Activated CD4-positive, alpha-beta T cell treated with anti-CD3 and anti-CD28 coated beads, Interleukin-2, amount 10 ng/mL, durations not matched to agents 7 days and 5 days (primary cell): ENCODE measurements at regions of chr2 and their contacts with region 1.

Region 1: DNA sequence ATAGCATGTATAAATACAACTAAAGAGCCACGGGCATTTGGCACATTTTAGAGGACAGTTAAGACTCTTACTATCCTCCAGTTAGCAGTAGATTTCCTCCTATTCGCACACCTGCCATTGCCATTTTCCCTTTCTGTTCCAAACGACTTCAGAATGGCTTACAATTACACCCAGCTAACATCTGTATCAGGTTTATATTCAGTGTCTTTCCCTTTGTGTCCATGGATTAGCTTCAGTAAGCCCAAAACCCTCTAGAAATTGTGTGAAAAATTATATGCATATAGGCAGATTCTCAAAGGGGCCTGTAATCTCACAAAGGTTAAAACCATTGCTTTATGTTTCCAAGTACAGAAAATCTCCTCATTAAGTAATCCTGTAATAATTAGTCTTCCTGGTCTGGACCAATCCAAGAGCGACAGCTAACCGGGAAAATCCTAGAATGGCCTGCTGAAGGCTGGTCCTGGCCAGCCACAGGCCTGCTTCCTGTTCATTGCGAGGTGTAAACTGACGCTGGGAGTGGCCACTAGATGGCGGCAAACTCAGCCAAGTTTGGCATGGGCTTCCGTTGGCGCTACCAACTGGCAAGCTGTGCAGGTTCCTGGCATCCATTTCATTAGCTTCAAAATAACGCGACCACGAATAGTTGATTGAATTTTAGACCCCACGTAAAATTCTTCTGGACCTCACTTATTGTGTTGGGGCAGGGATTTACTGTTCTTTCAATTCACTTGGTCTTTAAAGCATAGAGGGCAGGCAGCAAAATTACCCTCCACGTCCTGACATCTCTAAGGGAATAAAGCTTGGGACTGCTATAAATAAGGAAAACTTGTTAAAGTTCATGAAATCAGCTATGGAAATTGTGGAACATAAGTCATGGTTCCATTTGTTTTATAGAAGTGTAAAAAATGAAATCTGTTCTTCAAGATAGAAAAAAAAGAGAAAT is 17.1 kb downstream of the ARHGAP25 start:
- DNase-seq: peak; percentile 93
- H3K4me3 Mint-ChIP-seq: peak overlapping the region; percentile 15
- H3K27ac Mint-ChIP-seq: peak overlapping the region; percentile 72
- H3K4me1 Mint-ChIP-seq: peaks cover 88% of the 10 kb centered on the region
- H3K27me3 Mint-ChIP-seq: no peaks in the 10 kb centered on the region

Region 2: DNA sequence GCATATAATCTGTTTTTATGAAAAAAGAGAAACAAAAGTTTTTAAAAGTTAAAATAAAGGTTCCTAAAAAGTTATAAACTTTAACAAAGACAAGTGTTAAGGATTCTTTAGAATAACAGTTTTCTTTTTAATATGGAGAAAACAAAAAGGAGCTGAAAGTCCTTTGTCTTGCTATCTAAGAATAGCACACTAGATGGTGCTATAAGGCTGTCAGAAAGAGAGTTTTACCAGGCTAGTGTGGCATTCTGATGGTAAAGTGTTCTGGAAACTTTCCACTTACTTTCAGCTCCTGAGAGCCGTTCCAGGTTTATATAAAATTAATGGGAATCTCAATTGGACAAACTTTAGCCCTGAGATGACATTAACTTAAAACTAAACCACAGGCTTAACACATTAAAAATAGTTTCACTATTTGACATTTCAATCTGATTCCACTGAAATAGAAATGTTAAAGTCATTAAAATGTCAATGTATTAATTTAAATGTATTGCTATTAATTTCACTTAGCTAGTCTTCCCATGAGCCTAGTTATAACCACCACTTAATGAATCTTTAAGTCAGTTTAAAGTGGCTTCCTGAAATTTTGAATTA is 288.3 kb before region 1 on chr2:
- CTCF ChIA-PET with region 1: interaction called, 10 read pairs
- POLR2A ChIA-PET with region 1: interaction called, 3 read pairs
- DNase-seq: peak; percentile 31
- H3K4me3 Mint-ChIP-seq: no peak overlapping the region
- H3K27ac Mint-ChIP-seq: no peak overlapping the region
- H3K4me1 Mint-ChIP-seq: peaks cover 33% of the 10 kb centered on the region
- H3K27me3 Mint-ChIP-seq: no peaks in the 10 kb centered on the region

Region 3: GRCh38 chr2:68734688-68735525 is 16.8 kb before region 1 on chr2 and contains the start of gene ARHGAP25:
- CTCF ChIA-PET with region 1: interaction called, 82 read pairs
- POLR2A ChIA-PET with region 1: no interaction called
- DNase-seq: peak; percentile 71
- H3K4me3 Mint-ChIP-seq: no peak within 1 kb of the TSS
- H3K27ac Mint-ChIP-seq: no peak within 1 kb of the TSS
- H3K4me1 Mint-ChIP-seq: peaks cover 38% of the 10 kb centered on the region
- H3K27me3 Mint-ChIP-seq: no peaks in the 10 kb centered on the region
- total RNA-seq, gene ARHGAP25: 94.9 to 97.8 TPM

Region 4: DNA sequence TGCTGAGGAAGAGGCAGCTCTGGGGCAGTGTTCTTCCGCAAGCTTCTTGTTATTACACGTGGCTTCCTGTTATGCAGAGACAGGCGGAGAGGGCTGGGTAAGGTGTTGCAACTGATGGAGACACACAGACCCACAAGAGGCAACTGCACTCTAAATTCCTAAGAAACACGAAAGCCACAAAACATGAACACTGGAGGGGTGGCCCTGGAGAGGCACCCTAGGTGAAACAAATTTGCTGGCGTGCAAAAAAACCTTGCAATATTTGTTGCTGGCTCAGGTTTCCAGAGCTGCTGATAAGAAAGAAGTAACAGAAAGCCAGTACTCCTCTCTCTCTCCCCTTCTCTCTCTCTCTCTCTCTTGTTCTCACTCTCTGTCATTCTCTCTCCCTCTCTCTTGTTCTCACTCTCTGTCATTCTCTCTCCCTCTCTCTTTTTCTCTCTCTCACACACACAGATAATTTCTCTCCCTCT is 14.7 kb after region 1 on chr2:
- CTCF ChIA-PET with region 1: interaction called, 29 read pairs
- POLR2A ChIA-PET with region 1: interaction called, 3 read pairs
- DNase-seq: peak; percentile 81
- H3K4me3 Mint-ChIP-seq: peak overlapping the region; percentile 76
- H3K27ac Mint-ChIP-seq: peak overlapping the region; percentile 99
- H3K4me1 Mint-ChIP-seq: peaks cover 97% of the 10 kb centered on the region
- H3K27me3 Mint-ChIP-seq: no peaks in the 10 kb centered on the region

Region 5: GRCh38 chr2:68915393-68915792 is 163.7 kb after region 1 on chr2:
- CTCF ChIA-PET with region 1: interaction called, 14 read pairs
- POLR2A ChIA-PET with region 1: interaction called, 3 read pairs
- DNase-seq: no peak
- H3K4me3 Mint-ChIP-seq: no peak overlapping the region
- H3K27ac Mint-ChIP-seq: no peak overlapping the region
- H3K4me1 Mint-ChIP-seq: peaks cover 7% of the 10 kb centered on the region
- H3K27me3 Mint-ChIP-seq: no peaks in the 10 kb centered on the region

Region 6: DNA sequence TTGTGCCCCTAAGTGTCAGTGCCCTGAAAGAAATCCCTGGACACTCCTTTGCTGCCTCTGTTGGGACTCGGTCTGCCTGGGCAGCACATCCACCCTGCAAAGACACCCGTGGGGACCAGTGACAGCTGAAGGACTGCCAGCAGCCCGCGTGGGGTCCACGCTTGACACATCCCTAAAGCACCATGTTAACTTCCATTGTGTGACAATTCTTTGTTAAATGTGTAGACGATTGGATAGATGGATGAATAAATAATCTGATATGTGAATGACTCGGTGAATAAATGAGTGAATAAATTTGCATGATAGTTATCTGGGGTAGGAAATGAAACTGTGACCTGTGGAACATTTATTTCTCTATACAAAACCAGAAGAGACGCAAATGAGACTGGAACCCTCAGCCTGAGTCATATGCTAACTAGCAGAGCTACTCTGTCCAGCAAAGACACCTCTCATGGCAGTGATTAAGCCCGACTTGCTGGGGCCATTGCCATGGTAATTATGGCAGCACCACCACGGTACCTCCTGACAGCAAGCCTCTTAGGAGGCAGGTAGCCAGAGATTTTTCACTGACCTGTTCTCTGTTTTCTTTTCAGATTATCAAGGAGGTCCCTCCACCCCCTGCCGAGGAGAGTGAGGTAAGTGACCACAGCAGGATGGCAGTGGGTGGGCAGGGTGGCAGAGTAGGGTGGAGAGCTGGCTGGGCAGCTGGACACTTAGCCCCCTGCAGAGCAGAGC is 418.2 kb after region 1 on chr2:
- CTCF ChIA-PET with region 1: no interaction called
- POLR2A ChIA-PET with region 1: no interaction called
- DNase-seq: no peak
- H3K4me3 Mint-ChIP-seq: no peak overlapping the region
- H3K27ac Mint-ChIP-seq: no peak overlapping the region
- H3K4me1 Mint-ChIP-seq: no peaks in the 10 kb centered on the region
- H3K27me3 Mint-ChIP-seq: peaks cover 29% of the 10 kb centered on the region